WTC11 (cell line): ENCODE measurements at regions of chr14 and their contacts with region 1.

Region 1: GRCh38 chr14:41280745-41281144 is 325.9 kb upstream of the LRFN5 start:
- DNase-seq: no peak
- ATAC-seq: peak; percentile 83
- H3K4me3 Mint-ChIP-seq: no peak overlapping the region
- H3K27ac Mint-ChIP-seq: no peak overlapping the region
- H3K4me1 Mint-ChIP-seq: peaks cover 4% of the 10 kb centered on the region
- H3K27me3 Mint-ChIP-seq: no peaks in the 10 kb centered on the region
- CTCF ChIP-seq: no peak

Region 2: GRCh38 chr14:41609704-41610183 is 329.0 kb after region 1 on chr14:
- CTCF ChIA-PET with region 1: interaction called, 16 read pairs
- POLR2A ChIA-PET with region 1: no interaction called
- DNase-seq: peak; percentile 81
- ATAC-seq: peak; percentile 73
- H3K4me3 Mint-ChIP-seq: peak overlapping the region; percentile 91
- H3K27ac Mint-ChIP-seq: no peak overlapping the region
- H3K4me1 Mint-ChIP-seq: peaks cover 30% of the 10 kb centered on the region
- H3K27me3 Mint-ChIP-seq: peaks cover 41% of the 10 kb centered on the region
- CTCF ChIP-seq: no peak